ENCODE measurements at regions of chr13 and their contacts with region 1.

Region 1: GRCh38 chr13:24355103-24355502 is 45.7 kb downstream of the C1QTNF9 start:
- DNase-seq: no peak
- H3K4me3 ChIP-seq: no peak overlapping the region
- H3K27ac ChIP-seq: no peak overlapping the region
- H3K4me1 ChIP-seq: no peaks in the 10 kb centered on the region
- H3K27me3 ChIP-seq: no peaks in the 10 kb centered on the region
- CTCF ChIP-seq: no peak
- POLR2A ChIP-seq: no peak

Region 2: GRCh38 chr13:22936228-22936627 is 1418.9 kb before region 1 on chr13:
- intact Hi-C with region 1: loop called (anchors 5 kb)
- DNase-seq: no peak
- H3K4me3 ChIP-seq: no peak overlapping the region
- H3K27ac ChIP-seq: no peak overlapping the region
- H3K4me1 ChIP-seq: no peaks in the 10 kb centered on the region
- H3K27me3 ChIP-seq: no peaks in the 10 kb centered on the region
- CTCF ChIP-seq: no peak
- POLR2A ChIP-seq: no peak

Region 3: GRCh38 chr13:24053519-24054251 is 301.4 kb before region 1 on chr13:
- intact Hi-C with region 1: no loop called
- DNase-seq: peak; percentile 27 to 58
- H3K4me3 ChIP-seq: no peak overlapping the region
- H3K27ac ChIP-seq: peak overlapping the region; percentile 70 to 82
- H3K4me1 ChIP-seq: peaks cover 4 to 7% of the 10 kb centered on the region in 2 donors
- H3K27me3 ChIP-seq: no peaks in the 10 kb centered on the region
- CTCF ChIP-seq: peak; percentile 49 to 75 (median 72)
- POLR2A ChIP-seq: no peak